Activated CD4-positive, alpha-beta T cell treated with anti-CD3 and anti-CD28 coated beads for 36 hours (primary cell): ENCODE measurements at regions of chr11 and their contacts with region 1.

Region 1: DNA sequence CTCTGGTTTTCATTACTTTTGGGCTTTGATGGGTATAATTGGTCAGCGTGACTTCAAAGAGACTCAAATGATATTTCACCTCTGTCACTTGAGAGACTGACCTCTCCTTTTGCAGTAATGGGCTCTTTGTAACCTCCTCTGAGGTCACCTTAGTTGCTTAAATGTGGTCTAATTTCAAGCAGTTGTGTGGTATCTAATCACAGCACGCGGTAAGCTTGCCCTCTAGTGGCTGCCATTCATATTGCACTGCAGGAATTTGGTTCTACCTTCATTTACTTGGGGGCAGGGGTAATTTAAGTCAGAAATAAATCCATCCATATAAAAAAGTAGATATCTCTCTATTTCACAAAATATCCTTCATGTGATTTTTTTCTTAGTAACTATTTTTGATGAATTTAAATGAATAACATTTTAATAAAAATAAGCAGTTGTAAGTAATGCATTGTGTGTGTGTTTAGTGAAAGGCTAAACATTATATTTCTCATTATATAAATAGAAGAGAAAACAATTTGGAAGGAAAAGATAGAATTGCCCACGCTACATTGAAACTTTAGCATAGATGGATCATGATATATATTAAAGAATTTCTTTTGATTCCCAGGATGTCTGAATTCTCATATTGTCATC is 55.0 kb upstream of the ANO3 start:
- DNase-seq: peak; percentile 68
- ATAC-seq: no peak
- H3K4me3 Mint-ChIP-seq: no peak overlapping the region
- H3K27ac Mint-ChIP-seq: no peak overlapping the region
- H3K4me1 Mint-ChIP-seq: no peaks in the 10 kb centered on the region
- H3K27me3 Mint-ChIP-seq: peaks cover 6% of the 10 kb centered on the region

Region 2: DNA sequence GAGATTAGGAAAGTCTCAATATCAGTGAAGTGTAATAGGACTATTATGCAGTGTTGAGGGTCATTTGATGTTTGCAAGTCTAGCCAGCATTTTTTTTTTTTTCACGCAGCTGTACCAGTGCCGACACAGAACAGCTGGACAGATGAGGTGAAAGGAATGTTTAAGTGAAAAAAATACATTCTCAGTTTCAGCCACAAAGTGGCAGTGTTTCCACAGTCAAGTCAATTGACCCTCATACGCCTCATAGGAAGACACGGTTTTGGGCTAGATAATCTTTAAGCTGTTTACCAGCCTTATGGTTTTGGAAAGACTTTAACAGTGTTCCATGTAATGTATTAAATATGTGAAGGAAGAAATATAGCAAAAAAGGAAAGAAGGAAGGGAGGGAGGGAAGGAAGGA is 294.9 kb before region 1 on chr11:
- CTCF ChIA-PET with region 1: no interaction called
- POLR2A ChIA-PET with region 1: no interaction called
- intact Hi-C with region 1: loop called in 1 of 2 experiments (anchors 2 kb)
- DNase-seq: no peak
- ATAC-seq: no peak
- H3K4me3 Mint-ChIP-seq: no peak overlapping the region
- H3K27ac Mint-ChIP-seq: no peak overlapping the region
- H3K4me1 Mint-ChIP-seq: no peaks in the 10 kb centered on the region
- H3K27me3 Mint-ChIP-seq: no peaks in the 10 kb centered on the region

Region 3: GRCh38 chr11:26556581-26556980 is 279.7 kb after region 1 on chr11:
- CTCF ChIA-PET with region 1: no interaction called
- POLR2A ChIA-PET with region 1: no interaction called
- intact Hi-C with region 1: no loop called
- DNase-seq: no peak
- ATAC-seq: no peak
- H3K4me3 Mint-ChIP-seq: no peak overlapping the region
- H3K27ac Mint-ChIP-seq: no peak overlapping the region
- H3K4me1 Mint-ChIP-seq: no peaks in the 10 kb centered on the region
- H3K27me3 Mint-ChIP-seq: no peaks in the 10 kb centered on the region